CD4-positive, alpha-beta memory T cell (primary cell): ENCODE measurements at regions of chr9 and their contacts with region 1.

Region 1: DNA sequence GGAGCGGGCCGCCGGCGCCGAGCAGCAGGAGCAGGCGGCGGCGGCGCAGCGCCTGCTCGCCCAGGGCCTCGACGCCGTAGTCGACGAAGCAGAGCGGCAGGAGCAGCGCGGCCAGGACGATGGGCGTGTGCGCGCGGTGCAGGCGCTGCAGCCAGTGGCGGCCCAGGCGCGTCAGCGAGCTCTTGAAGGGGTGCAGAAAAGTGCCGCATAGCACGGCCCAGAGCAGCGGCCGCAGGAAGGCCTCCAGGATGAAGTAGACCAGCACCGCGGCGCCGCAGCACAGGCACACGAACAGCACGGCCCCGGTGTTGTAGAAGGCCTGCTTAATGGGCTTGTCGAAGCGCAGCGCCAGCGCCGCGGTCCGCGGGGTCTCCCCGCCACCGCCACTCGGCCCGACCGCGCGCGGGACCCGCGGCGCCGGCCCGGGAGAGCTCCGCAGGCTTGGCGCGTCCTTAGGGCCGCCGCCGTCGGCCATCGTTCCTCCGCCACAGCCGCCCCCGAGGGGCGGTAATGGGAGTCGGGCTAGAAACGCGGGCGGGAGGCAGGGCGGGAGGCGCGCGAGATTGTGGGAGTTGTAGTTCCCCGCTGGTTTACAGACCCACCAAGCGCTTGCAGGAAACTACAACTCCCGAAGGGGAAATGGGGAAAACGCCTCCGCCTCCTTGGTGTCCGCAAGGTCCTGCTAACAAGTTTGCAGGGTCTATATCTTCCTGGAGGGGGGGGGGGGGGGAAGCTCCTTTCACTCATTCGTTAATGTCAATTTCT is at the start of gene TMEM245:
- DNase-seq: peak; percentile 92 to 98 (median 96)
- H3K4me3 ChIP-seq: peak within 1 kb of the TSS; percentile 74 to 75
- H3K4me3 Mint-ChIP-seq: peak within 1 kb of the TSS; percentile 94 to 98 (median 95)
- H3K27ac ChIP-seq: peak within 1 kb of the TSS; percentile 88
- H3K27ac Mint-ChIP-seq: peak within 1 kb of the TSS; percentile 76 to 95 (median 92)
- H3K4me1 ChIP-seq: peaks cover 40% of the 10 kb centered on the region
- H3K4me1 Mint-ChIP-seq: peaks cover 27 to 48% (median 38%) of the 10 kb centered on the region in 4 donors
- H3K27me3 ChIP-seq: no peaks in the 10 kb centered on the region
- H3K27me3 Mint-ChIP-seq: no peaks in the 10 kb centered on the region
- total RNA-seq, gene TMEM245: 72.6 to 74.3 TPM

Region 2: DNA sequence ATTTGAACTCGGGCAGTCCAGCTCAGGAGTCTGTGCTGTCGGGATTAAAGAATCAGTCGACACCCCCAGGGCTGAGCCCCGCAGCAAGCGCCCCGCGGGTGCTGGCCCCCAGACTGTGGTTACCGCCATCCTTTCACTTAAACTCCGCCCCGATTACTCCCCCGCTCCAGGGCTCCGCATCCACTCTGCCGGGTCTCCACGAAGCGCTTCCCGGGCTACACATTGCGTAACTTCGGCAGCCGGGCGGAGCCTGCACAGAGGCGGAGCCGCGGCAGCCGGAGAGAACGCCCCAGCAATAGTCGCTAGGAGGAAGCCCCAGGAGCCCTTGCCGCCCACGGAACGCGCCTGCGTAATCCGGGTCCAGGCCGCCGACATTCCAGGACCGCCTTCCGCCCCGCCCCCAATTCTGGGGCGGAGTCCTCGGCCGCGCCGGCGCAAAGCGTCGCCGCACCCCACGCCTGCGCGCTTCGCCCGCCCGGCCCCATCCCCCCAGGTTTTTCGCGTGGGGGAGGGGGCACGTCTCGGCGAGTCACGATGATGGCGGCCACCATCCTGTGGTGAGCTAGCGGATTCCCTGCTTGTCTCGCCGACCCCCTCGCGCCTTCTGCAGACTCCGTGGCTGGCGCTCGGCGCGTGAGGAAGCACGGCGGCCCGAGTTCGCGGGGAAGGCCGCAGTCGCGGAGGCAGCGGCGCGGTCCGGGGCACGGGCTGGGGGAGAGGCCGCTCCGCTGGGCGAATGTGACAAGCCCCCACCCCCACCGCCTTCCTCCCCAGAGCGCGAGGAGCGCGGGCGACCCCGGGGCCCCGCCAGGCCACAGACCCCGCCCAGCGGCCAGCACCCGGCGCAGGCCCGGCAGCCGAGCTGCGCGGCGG is 1836.6 kb before region 1 on chr9 and contains the start of gene RAD23B:
- CTCF ChIA-PET with region 1: no interaction called
- POLR2A ChIA-PET with region 1: no interaction called
- intact Hi-C with region 1: loop called (anchors 5 kb)
- DNase-seq: peak; percentile 96 to 100 (median 99)
- H3K4me3 ChIP-seq: peak within 1 kb of the TSS; percentile 85 to 89
- H3K4me3 Mint-ChIP-seq: peak within 1 kb of the TSS; percentile 94 to 100 (median 98)
- H3K27ac ChIP-seq: peak within 1 kb of the TSS; percentile 91
- H3K27ac Mint-ChIP-seq: peak within 1 kb of the TSS; percentile 92 to 98 (median 95)
- H3K4me1 ChIP-seq: peaks cover 44% of the 10 kb centered on the region
- H3K4me1 Mint-ChIP-seq: peaks cover 25 to 55% (median 36%) of the 10 kb centered on the region in 4 donors
- H3K27me3 ChIP-seq: no peaks in the 10 kb centered on the region
- H3K27me3 Mint-ChIP-seq: no peaks in the 10 kb centered on the region
- total RNA-seq, gene RAD23B: 49.5 to 54.2 TPM

Region 3: DNA sequence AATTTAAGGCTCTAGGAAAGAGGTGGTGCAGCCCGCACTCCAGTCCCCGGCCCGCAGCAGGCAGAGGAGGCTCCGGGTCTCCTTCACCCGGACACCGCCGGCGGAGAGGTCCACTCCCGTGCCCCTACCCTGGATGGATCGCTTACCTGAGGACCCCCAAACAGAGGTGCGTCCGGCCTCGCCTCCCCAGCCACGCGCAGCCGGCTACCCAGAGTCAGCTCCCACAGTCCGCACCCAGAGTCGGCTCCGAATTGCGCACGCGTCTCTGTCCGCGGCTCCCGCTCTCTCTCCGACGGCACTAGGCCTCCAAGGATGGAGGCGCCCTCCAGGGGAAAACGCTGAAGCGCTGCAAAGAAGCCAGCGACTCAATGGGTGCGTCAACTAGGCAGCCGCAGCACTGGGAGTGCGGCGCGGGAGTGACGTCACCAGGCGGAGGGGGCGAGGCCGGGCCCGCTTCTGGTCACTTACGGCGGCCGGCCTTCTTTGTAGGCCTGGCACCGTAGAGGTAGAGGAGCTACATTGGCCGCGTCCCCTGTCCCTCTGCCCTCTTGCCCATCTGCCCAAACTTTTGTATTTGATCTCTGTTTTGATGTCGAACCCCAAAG is 185.8 kb before region 1 on chr9 and contains the start of gene ELP1:
- CTCF ChIA-PET with region 1: no interaction called
- POLR2A ChIA-PET with region 1: interaction called, 10 read pairs
- intact Hi-C with region 1: loop called (anchors 1 kb)
- DNase-seq: peak; percentile 91 to 95 (median 93)
- H3K4me3 ChIP-seq: peak within 1 kb of the TSS; percentile 78 to 100
- H3K4me3 Mint-ChIP-seq: peak within 1 kb of the TSS; percentile 99 to 100 (median 99)
- H3K27ac ChIP-seq: peak within 1 kb of the TSS; percentile 83
- H3K27ac Mint-ChIP-seq: peak within 1 kb of the TSS; percentile 91 to 99 (median 99)
- H3K4me1 ChIP-seq: peaks cover 26% of the 10 kb centered on the region
- H3K4me1 Mint-ChIP-seq: peaks cover 28 to 47% (median 38%) of the 10 kb centered on the region in 4 donors
- H3K27me3 ChIP-seq: no peaks in the 10 kb centered on the region
- H3K27me3 Mint-ChIP-seq: no peaks in the 10 kb centered on the region
- total RNA-seq, gene ELP1: 29.4 to 32.3 TPM

Region 4: GRCh38 chr9:109012876-109013678 is 106.5 kb before region 1 on chr9 and contains the start of gene CTNNAL1:
- CTCF ChIA-PET with region 1: interaction called, 3 read pairs
- POLR2A ChIA-PET with region 1: interaction called, 3 read pairs
- intact Hi-C with region 1: loop called (anchors 1 kb)
- DNase-seq: peak; percentile 82 to 91 (median 83)
- H3K4me3 ChIP-seq: peak within 1 kb of the TSS; percentile 66
- H3K4me3 Mint-ChIP-seq: peak within 1 kb of the TSS; percentile 93 to 100 (median 96)
- H3K27ac ChIP-seq: peak within 1 kb of the TSS; percentile 61
- H3K27ac Mint-ChIP-seq: peak within 1 kb of the TSS; percentile 93 to 99 (median 95)
- H3K4me1 ChIP-seq: peaks cover 13% of the 10 kb centered on the region
- H3K4me1 Mint-ChIP-seq: peaks cover 17 to 31% (median 28%) of the 10 kb centered on the region in 4 donors
- H3K27me3 ChIP-seq: no peaks in the 10 kb centered on the region
- H3K27me3 Mint-ChIP-seq: no peaks in the 10 kb centered on the region
- total RNA-seq, gene CTNNAL1: 2.6 to 3.3 TPM

Region 5: GRCh38 chr9:109083813-109084405 is 35.7 kb before region 1 on chr9:
- CTCF ChIA-PET with region 1: no interaction called
- POLR2A ChIA-PET with region 1: interaction called, 14 read pairs
- intact Hi-C with region 1: loop called (anchors 5 kb)
- DNase-seq: no peak
- H3K4me3 ChIP-seq: no peak overlapping the region
- H3K4me3 Mint-ChIP-seq: no peak overlapping the region
- H3K27ac ChIP-seq: no peak overlapping the region
- H3K27ac Mint-ChIP-seq: peak overlapping the region in 2 of 7 donors; percentile 11 to 18
- H3K4me1 ChIP-seq: no peaks in the 10 kb centered on the region
- H3K4me1 Mint-ChIP-seq: peaks cover 4 to 14% (median 7%) of the 10 kb centered on the region in 4 donors
- H3K27me3 ChIP-seq: no peaks in the 10 kb centered on the region
- H3K27me3 Mint-ChIP-seq: no peaks in the 10 kb centered on the region

Region 6: DNA sequence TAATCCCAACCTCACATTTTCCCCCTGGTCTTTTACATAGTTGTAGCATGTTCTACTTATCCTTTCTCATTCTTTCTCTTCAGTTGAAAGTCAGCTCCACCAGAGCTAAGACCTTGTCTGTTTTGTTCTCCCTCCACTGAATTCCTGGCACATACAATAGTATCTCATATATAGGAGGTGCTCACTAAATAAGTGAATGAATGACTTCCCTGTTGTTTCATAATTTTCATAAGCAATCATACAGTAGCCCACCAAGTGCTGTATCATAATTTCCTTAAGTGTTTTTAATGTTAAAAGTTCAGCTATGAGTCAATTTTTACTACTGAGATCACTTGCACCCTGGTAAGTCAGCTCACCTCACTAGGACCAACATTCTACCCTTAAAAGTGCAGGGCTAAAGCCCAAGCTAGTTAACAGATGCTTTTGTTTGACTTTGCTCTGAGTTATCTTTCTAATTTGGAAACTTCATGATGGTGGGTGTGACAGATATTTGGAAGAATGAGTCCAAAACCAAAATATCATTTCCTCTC is 27.5 kb before region 1 on chr9:
- CTCF ChIA-PET with region 1: interaction called, 4 read pairs
- POLR2A ChIA-PET with region 1: interaction called, 99 read pairs
- intact Hi-C with region 1: no loop called
- DNase-seq: no peak
- H3K4me3 ChIP-seq: no peak overlapping the region
- H3K4me3 Mint-ChIP-seq: no peak overlapping the region
- H3K27ac ChIP-seq: no peak overlapping the region
- H3K27ac Mint-ChIP-seq: peak overlapping the region in 4 of 7 donors; percentile 16 to 75 (median 60)
- H3K4me1 ChIP-seq: peaks cover 24% of the 10 kb centered on the region
- H3K4me1 Mint-ChIP-seq: peaks cover 25 to 48% (median 38%) of the 10 kb centered on the region in 4 donors
- H3K27me3 ChIP-seq: no peaks in the 10 kb centered on the region
- H3K27me3 Mint-ChIP-seq: no peaks in the 10 kb centered on the region

Region 7: DNA sequence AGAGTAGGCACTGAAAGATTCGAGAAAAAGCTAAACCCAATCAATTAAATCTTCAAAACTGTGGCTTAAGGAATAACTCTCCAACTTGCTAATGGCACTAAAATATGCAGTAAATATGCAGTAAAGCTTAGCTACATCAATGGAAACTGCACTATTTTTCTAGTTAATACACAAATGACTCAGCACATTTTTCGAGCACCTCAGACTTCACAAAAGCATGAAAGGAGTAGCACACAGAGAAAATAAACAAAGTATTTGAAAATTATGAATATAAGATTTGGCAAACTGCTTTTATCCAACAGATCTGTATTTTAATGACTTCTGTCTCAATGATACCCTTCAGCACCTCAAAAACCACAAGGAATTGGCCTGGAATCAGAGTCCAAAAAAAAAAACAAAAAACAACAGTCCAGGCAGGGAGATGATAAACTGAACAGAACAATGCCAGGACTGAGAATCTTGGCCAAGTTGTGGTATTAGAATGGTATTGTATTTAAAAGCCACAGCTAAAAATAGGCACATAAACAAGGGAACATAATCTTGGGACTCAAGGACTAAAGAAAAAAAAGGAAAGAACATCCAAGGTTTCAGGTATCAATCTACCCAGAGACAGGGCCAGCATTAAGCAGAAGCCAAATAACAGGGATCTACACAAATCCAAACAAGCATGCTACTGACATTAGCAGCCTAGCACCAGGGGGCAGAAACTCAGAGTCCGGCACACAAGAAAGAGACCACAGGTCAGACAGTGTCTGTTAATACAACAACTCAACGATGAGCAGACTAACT is 21.3 kb before region 1 on chr9:
- CTCF ChIA-PET with region 1: interaction called, 7 read pairs
- POLR2A ChIA-PET with region 1: interaction called, 99 read pairs
- intact Hi-C with region 1: loop called (anchors 1 kb)
- DNase-seq: no peak
- H3K4me3 ChIP-seq: peak overlapping the region in 1 of 2 donors; percentile 17
- H3K4me3 Mint-ChIP-seq: peak overlapping the region in 7 of 8 donors; percentile 24 to 59 (median 39)
- H3K27ac ChIP-seq: no peak overlapping the region
- H3K27ac Mint-ChIP-seq: peak overlapping the region; percentile 29 to 89 (median 65)
- H3K4me1 ChIP-seq: peaks cover 81% of the 10 kb centered on the region
- H3K4me1 Mint-ChIP-seq: peaks cover 59 to 95% (median 77%) of the 10 kb centered on the region in 4 donors
- H3K27me3 ChIP-seq: no peaks in the 10 kb centered on the region
- H3K27me3 Mint-ChIP-seq: no peaks in the 10 kb centered on the region

Region 8: GRCh38 chr9:109132567-109133021 is 13.0 kb after region 1 on chr9:
- CTCF ChIA-PET with region 1: no interaction called
- POLR2A ChIA-PET with region 1: no interaction called
- intact Hi-C with region 1: no loop called
- DNase-seq: no peak
- H3K4me3 ChIP-seq: no peak overlapping the region
- H3K4me3 Mint-ChIP-seq: no peak overlapping the region
- H3K27ac ChIP-seq: no peak overlapping the region
- H3K27ac Mint-ChIP-seq: no peak overlapping the region
- H3K4me1 ChIP-seq: no peaks in the 10 kb centered on the region
- H3K4me1 Mint-ChIP-seq: peaks cover 0 to 5% (median under 1%) of the 10 kb centered on the region in 4 donors
- H3K27me3 ChIP-seq: no peaks in the 10 kb centered on the region
- H3K27me3 Mint-ChIP-seq: no peaks in the 10 kb centered on the region

Region 9: DNA sequence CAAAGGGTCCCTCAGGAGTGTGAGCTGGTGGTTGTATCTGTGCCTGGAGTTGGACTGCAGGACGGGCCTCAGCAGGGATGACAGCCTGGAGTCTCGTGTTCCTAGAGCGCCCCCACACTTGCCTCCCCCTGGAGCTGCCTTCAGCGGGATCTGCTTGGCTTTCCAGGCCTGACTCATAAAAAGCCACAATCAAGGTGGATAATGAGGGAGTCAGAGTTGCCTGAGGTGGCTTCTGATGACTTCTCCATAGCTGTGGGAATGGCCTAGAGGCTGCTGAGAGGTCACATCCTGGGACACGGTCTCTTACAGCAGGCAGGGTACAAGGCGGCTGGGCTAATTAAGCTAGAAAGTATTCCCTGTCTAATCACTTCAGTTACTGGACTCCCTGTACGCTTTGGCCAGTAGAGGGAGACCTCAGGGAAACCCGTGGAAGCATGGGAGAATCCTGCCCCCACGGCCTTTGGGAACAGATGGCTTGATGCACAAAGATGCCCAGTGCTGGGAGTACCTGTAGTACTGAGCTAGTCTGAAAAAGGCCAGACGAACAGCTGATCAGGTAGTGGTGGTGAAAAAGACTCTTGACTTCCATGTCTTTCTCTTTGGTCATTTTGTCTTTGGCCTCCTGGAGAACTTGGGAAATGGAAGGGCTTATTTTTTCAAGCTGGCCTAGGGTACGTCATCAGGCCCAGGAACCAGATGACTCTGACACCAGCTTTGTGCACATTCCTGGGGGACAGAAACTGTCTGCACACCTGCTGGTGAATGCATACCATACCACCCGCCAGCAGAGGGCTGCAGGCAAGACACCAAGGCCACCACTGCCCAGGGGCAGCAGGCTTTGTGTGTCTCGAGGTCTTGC is 63.5 kb after region 1 on chr9:
- CTCF ChIA-PET with region 1: no interaction called
- POLR2A ChIA-PET with region 1: no interaction called
- intact Hi-C with region 1: no loop called
- DNase-seq: no peak
- H3K4me3 ChIP-seq: no peak overlapping the region
- H3K4me3 Mint-ChIP-seq: no peak overlapping the region
- H3K27ac ChIP-seq: no peak overlapping the region
- H3K27ac Mint-ChIP-seq: no peak overlapping the region
- H3K4me1 ChIP-seq: peaks cover 11% of the 10 kb centered on the region
- H3K4me1 Mint-ChIP-seq: peaks cover 6 to 8% (median 7%) of the 10 kb centered on the region in 4 donors
- H3K27me3 ChIP-seq: no peaks in the 10 kb centered on the region
- H3K27me3 Mint-ChIP-seq: peaks cover 1 to 7% of the 10 kb centered on the region in 2 donors

Region 10: DNA sequence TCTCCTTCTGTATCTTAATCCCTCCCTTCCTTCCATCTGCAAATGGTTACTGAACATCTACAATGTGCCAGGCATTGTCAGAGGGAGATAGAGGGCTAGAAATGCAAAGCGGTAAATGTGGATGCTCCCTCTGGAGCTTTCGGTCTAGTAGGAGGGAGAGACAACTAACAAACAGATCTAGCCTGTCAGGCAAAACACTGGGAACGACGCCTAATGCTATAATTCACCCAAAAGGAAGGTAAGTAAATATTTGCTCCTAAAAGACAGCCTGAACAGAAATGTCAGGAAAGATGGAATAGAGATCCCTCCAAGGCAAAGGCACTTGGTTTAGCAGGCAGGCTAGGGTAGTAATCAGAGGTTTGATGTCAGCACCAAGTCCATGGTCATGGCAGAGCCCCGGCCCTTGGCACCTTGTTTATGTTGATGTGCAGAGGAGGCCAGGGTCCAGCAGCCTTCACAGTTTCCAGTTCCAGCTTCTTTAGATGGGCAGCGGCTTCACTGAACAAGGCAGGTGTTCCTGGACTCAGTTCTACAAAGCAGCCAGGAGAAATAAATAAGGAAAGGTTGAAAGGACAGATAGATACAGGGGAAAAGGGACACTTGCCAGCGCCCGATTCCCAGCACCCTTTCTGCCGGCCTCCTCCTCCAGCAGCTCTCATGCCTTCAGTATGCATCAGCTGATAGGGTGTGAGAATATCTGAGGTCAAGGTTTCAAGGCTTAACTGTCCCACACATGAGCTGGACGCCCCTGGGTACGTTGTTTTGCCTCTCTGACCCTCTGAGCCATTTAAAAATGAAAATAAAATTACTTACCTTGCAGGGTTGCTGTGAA is 93.9 kb after region 1 on chr9:
- CTCF ChIA-PET with region 1: no interaction called
- POLR2A ChIA-PET with region 1: no interaction called
- intact Hi-C with region 1: no loop called
- DNase-seq: no peak
- H3K4me3 ChIP-seq: no peak overlapping the region
- H3K4me3 Mint-ChIP-seq: no peak overlapping the region
- H3K27ac ChIP-seq: no peak overlapping the region
- H3K27ac Mint-ChIP-seq: no peak overlapping the region
- H3K4me1 ChIP-seq: no peaks in the 10 kb centered on the region
- H3K4me1 Mint-ChIP-seq: no peaks in the 10 kb centered on the region
- H3K27me3 ChIP-seq: no peaks in the 10 kb centered on the region
- H3K27me3 Mint-ChIP-seq: peaks cover 6 to 13% of the 10 kb centered on the region in 2 donors